ENCODE measurements at regions of chr20 and their contacts with region 1.

Region 1: DNA sequence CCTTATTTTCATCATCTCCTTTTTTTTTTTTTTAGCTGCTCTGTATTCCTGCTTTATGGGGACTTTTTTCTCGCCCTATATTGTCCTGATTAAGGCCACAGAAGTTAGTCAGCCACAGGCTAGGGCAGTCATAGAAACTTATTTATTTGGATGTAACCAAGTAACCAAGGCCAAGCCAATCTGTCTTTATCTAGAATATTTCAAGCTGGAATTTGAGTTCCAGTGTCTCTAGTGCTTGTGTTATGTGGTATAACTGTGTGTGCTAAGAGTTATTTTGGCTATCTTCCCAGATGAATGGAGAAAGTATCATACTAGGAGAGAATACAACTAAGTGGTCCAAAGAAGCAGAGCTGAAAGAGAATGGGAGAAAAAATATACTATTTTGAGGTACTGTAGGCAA is 751.5 kb downstream of the CBLN4 start:
- DNase-seq: no peak
- ATAC-seq: peak; percentile 95 to 98 (median 98)
- H3K4me3 ChIP-seq: no peak overlapping the region
- H3K27ac ChIP-seq: peak overlapping the region in 11 of 12 donors; percentile 6 to 79 (median 68)
- H3K4me1 ChIP-seq: peaks cover 0 to 34% (median 17%) of the 10 kb centered on the region in 12 donors
- H3K27me3 ChIP-seq: no peaks in the 10 kb centered on the region
- CTCF ChIP-seq: no peak
- POLR2A ChIP-seq: no peak

Region 2: DNA sequence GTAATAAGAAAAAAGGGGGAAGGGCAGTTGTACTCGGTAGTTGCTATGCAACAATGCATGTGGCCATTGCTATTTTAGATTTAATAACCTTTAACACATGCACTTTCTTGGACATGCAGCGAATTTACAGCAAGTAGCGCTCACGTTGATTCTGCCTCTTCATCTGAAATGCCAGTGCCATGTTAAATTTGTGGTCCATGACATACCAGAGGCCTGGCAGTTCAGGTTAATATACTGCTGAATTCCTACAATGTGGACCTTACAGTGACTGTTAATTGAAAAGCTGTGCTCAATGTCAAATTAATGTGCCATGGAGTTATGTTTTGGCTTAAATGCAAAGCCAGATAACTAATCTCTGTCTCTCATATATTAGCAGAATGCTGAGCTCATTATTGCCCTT is 78.7 kb before region 1 on chr20:
- intact Hi-C with region 1: loop called in 1 of 10 experiments (anchors 5 kb)
- DNase-seq: no peak
- ATAC-seq: no peak
- H3K4me3 ChIP-seq: no peak overlapping the region
- H3K27ac ChIP-seq: no peak overlapping the region
- H3K4me1 ChIP-seq: peaks cover 0 to 18% (median 0%) of the 10 kb centered on the region in 12 donors
- H3K27me3 ChIP-seq: no peaks in the 10 kb centered on the region
- CTCF ChIP-seq: no peak
- POLR2A ChIP-seq: no peak

Region 3: GRCh38 chr20:55557191-55557590 is 303.4 kb after region 1 on chr20:
- intact Hi-C with region 1: no loop called
- DNase-seq: no peak
- ATAC-seq: no peak
- H3K4me3 ChIP-seq: no peak overlapping the region
- H3K27ac ChIP-seq: no peak overlapping the region
- H3K4me1 ChIP-seq: no peaks in the 10 kb centered on the region
- H3K27me3 ChIP-seq: no peaks in the 10 kb centered on the region
- CTCF ChIP-seq: no peak
- POLR2A ChIP-seq: no peak

Measured in heart left ventricle (tissue), 16 donors.